ENCODE measurements at regions of chr17 and their contacts with region 1.

Region 1: GRCh38 chr17:40559954-40560591 is 5.2 kb downstream of the CCR7 start:
- DNase-seq: peak; percentile 69 to 90 (median 84)
- ATAC-seq: peak; percentile 24
- H3K4me3 ChIP-seq: peak overlapping the region; percentile 71
- H3K4me3 Mint-ChIP-seq: peak overlapping the region; percentile 86
- H3K27ac ChIP-seq: peak overlapping the region; percentile 74 to 96
- H3K27ac Mint-ChIP-seq: peak overlapping the region; percentile 94
- H3K4me1 ChIP-seq: peaks cover 55% of the 10 kb centered on the region
- H3K4me1 Mint-ChIP-seq: peaks cover 90% of the 10 kb centered on the region
- H3K27me3 ChIP-seq: no peaks in the 10 kb centered on the region
- H3K27me3 Mint-ChIP-seq: no peaks in the 10 kb centered on the region
- CTCF ChIP-seq: peak; percentile 97

Region 2: DNA sequence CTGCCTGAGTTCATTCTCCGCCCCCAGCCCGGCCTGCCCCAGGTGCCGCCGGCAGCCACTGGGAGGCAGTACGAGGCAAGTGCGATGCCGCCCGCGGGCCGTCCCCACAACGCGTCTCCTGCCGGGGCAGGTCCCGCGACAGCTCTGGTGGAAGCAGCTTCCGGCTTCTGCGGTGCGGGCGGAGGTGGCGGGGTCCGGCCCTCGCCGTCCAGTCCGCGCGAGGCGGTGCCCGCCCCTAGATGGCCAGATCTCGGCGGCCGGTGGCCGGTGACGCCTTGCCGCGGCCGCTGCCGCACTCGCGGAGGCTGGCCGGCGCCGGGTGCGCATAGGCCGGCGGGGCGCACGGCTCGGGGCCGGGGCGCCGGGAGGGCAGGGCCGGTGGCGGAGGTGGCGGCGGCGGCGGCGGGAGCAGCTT is 197.4 kb before region 1 on chr17:
- CTCF ChIA-PET with region 1: interaction called, 11 read pairs
- POLR2A ChIA-PET with region 1: no interaction called
- intact Hi-C with region 1: loop called (anchors 1 kb)
- DNase-seq: peak; percentile 55 to 82 (median 77)
- ATAC-seq: peak; percentile 79
- H3K4me3 ChIP-seq: peak overlapping the region in 1 of 2 experiments; percentile 20
- H3K4me3 Mint-ChIP-seq: peak overlapping the region; percentile 78
- H3K27ac ChIP-seq: no peak overlapping the region
- H3K27ac Mint-ChIP-seq: no peak overlapping the region
- H3K4me1 ChIP-seq: peaks cover 15% of the 10 kb centered on the region
- H3K4me1 Mint-ChIP-seq: peaks cover 10% of the 10 kb centered on the region
- H3K27me3 ChIP-seq: peaks cover 0 to 6% of the 10 kb centered on the region in 2 experiments
- H3K27me3 Mint-ChIP-seq: peaks cover 6% of the 10 kb centered on the region
- CTCF ChIP-seq: peak; percentile 62

Region 3: DNA sequence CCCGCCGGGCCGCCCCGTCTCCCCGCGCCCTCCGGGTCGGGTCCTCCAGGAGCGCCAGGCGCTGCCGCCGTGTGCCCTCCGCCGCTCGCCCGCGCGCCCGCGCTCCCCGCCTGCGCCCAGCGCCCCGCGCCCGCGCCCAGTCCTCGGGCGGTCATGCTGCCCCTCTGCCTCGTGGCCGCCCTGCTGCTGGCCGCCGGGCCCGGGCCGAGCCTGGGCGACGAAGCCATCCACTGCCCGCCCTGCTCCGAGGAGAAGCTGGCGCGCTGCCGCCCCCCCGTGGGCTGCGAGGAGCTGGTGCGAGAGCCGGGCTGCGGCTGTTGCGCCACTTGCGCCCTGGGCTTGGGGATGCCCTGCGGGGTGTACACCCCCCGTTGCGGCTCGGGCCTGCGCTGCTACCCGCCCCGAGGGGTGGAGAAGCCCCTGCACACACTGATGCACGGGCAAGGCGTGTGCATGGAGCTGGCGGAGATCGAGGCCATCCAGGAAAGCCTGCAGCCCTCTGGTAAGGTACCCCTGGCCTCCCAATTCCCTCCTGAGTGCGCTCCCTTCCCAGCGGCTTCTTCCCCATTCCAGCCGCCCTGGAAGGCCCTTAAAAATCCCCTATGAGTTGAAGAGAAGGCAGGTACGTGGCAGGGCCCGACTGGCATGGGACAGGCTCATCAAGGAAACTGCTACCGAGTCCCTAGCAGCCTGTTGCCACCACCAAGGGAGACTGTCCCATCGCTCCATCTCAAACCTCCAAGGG is 116.3 kb before region 1 on chr17:
- CTCF ChIA-PET with region 1: interaction called, 14 read pairs
- POLR2A ChIA-PET with region 1: interaction called, 4 read pairs
- intact Hi-C with region 1: loop called in 1 of 2 experiments (anchors 1 kb)
- DNase-seq: peak; percentile 34 to 83 (median 67)
- ATAC-seq: peak; percentile 76
- H3K4me3 ChIP-seq: peak overlapping the region; percentile 42 to 49
- H3K4me3 Mint-ChIP-seq: peak overlapping the region; percentile 85
- H3K27ac ChIP-seq: no peak overlapping the region
- H3K27ac Mint-ChIP-seq: peak overlapping the region; percentile 66
- H3K4me1 ChIP-seq: peaks cover 22% of the 10 kb centered on the region
- H3K4me1 Mint-ChIP-seq: peaks cover 29% of the 10 kb centered on the region
- H3K27me3 ChIP-seq: no peaks in the 10 kb centered on the region
- H3K27me3 Mint-ChIP-seq: peaks cover 3% of the 10 kb centered on the region
- CTCF ChIP-seq: peak; percentile 30

Region 4: DNA sequence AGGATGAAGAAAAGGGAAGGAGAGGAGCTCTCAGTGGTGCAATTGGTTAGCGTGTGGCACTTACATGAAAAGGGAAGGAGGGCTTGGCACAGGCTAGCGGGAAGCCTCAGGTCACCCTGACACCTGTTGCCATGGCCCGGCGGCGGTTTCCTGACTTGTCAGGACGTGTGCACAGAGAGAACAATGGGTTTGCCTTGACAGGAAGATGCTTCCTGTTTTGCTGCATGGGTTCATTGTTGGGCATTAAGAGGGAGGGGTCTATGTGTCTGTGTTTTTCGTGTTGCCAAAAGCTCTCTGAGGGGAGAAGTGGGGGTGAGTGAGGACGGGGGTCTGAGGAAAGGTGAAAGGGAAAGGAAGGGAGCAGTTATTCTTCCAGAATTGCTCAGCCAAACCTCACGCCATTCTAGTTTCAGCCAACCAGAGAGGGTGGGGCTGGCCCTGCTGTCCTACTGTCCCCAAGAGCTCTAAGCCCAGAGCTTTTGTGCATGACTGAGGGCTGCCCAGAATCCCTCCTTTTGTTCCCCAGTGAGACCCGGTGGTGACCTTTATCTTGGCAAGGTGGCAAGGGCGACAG is 22.3 kb after region 1 on chr17:
- CTCF ChIA-PET with region 1: interaction called, 30 read pairs
- POLR2A ChIA-PET with region 1: interaction called, 32 read pairs
- intact Hi-C with region 1: loop called in 1 of 2 experiments (anchors 1 kb)
- DNase-seq: peak; percentile 48 to 90 (median 77)
- ATAC-seq: peak; percentile 85
- H3K4me3 ChIP-seq: peak overlapping the region; percentile 15 to 17
- H3K4me3 Mint-ChIP-seq: peak overlapping the region; percentile 79
- H3K27ac ChIP-seq: peak overlapping the region; percentile 60 to 74
- H3K27ac Mint-ChIP-seq: peak overlapping the region; percentile 94
- H3K4me1 ChIP-seq: peaks cover 86% of the 10 kb centered on the region
- H3K4me1 Mint-ChIP-seq: peaks cover 95% of the 10 kb centered on the region
- H3K27me3 ChIP-seq: no peaks in the 10 kb centered on the region
- H3K27me3 Mint-ChIP-seq: no peaks in the 10 kb centered on the region
- CTCF ChIP-seq: no peak

Region 5: DNA sequence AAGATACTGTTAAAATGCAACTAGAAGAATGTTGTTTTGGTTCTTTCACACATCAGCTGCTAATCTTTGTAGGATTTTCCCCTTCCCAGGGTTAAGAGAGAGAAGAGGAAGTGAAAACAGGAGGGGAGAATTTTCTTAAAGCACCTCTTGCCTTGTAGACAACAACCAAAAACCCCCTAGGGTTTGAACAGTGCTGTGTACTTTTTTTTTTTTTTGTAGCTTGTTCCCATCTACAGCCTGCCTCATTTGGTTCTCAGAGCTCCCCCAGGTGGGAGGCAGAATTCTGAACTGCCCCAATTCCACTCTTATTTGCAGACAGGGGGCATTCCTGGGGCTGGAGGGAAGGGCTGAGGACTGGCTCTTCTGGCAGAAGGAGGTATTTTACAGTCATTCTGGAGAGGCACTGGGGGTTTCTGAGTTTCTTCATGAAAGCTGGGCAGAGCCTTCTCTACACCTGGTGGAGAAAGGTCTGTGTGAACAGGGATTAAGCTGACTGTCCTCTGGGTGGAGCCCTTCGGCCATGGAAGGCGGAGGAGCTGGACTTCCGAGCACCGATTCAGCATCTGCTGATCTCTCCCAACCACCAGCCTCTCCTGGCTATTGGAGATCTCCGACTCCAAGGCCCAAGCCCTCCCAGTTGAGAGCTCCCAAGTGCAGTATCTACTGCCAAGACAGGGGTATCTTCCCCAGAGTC is 55.4 kb after region 1 on chr17:
- CTCF ChIA-PET with region 1: interaction called, 638 read pairs
- POLR2A ChIA-PET with region 1: interaction called, 724 read pairs
- intact Hi-C with region 1: loop called (anchors 1 kb)
- DNase-seq: peak in 7 of 9 experiments; percentile 45 to 88 (median 71)
- ATAC-seq: peak; percentile 45
- H3K4me3 ChIP-seq: peak overlapping the region in 1 of 2 experiments; percentile 7
- H3K4me3 Mint-ChIP-seq: peak overlapping the region; percentile 44
- H3K27ac ChIP-seq: peak overlapping the region; percentile 62 to 92
- H3K27ac Mint-ChIP-seq: peak overlapping the region; percentile 97
- H3K4me1 ChIP-seq: peaks cover 76% of the 10 kb centered on the region
- H3K4me1 Mint-ChIP-seq: peaks cover 71% of the 10 kb centered on the region
- H3K27me3 ChIP-seq: no peaks in the 10 kb centered on the region
- H3K27me3 Mint-ChIP-seq: no peaks in the 10 kb centered on the region
- CTCF ChIP-seq: no peak

Region 6: DNA sequence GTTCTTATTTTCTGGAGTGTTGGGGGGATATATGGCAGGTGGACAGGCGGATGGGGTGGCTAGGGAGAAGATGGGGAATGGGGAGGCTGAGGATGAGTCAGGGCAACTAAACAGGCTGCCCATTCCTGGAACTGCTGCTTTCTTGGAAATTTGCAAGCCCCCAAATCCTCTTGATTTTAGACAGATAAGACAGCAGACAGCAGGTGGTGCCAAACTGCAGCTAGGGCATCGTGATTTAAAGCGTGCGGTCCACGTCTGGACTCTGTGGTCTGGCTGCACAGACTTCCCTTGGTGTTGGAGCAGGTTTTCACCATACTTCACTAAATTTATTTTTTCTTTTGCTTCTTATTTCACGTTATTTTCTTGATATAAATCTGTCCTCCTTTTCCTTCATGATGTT is 154.4 kb after region 1 on chr17:
- CTCF ChIA-PET with region 1: no interaction called
- POLR2A ChIA-PET with region 1: no interaction called
- intact Hi-C with region 1: no loop called
- DNase-seq: no peak
- ATAC-seq: no peak
- H3K4me3 ChIP-seq: no peak overlapping the region
- H3K4me3 Mint-ChIP-seq: no peak overlapping the region
- H3K27ac ChIP-seq: no peak overlapping the region
- H3K27ac Mint-ChIP-seq: no peak overlapping the region
- H3K4me1 ChIP-seq: no peaks in the 10 kb centered on the region
- H3K4me1 Mint-ChIP-seq: no peaks in the 10 kb centered on the region
- H3K27me3 ChIP-seq: no peaks in the 10 kb centered on the region
- H3K27me3 Mint-ChIP-seq: peaks cover 8% of the 10 kb centered on the region
- CTCF ChIP-seq: no peak